ENCODE measurements at regions of chr7 and their contacts with region 1.

Region 1: GRCh38 chr7:148503875-148504487 is 86.6 kb upstream of the C7orf33 start:
- DNase-seq: peak in 1 of 2 experiments; percentile 29
- H3K4me3 ChIP-seq: no peak overlapping the region
- H3K4me3 Mint-ChIP-seq: no peak overlapping the region
- H3K27ac Mint-ChIP-seq: no peak overlapping the region
- H3K4me1 ChIP-seq: no peaks in the 10 kb centered on the region
- H3K4me1 Mint-ChIP-seq: peaks cover 20% of the 10 kb centered on the region
- H3K27me3 ChIP-seq: no peaks in the 10 kb centered on the region
- H3K27me3 Mint-ChIP-seq: no peaks in the 10 kb centered on the region
- CTCF ChIP-seq: peak; percentile 68 to 76

Region 2: GRCh38 chr7:148318102-148318811 is 185.7 kb before region 1 on chr7:
- CTCF ChIA-PET with region 1: no interaction called
- POLR2A ChIA-PET with region 1: interaction called, 12 read pairs
- intact Hi-C with region 1: no loop called
- DNase-seq: peak in 1 of 2 experiments; percentile 51
- H3K4me3 ChIP-seq: no peak overlapping the region
- H3K4me3 Mint-ChIP-seq: peak overlapping the region; percentile 28
- H3K27ac Mint-ChIP-seq: peak overlapping the region; percentile 58
- H3K4me1 ChIP-seq: peaks cover 24% of the 10 kb centered on the region
- H3K4me1 Mint-ChIP-seq: peaks cover 7% of the 10 kb centered on the region
- H3K27me3 ChIP-seq: no peaks in the 10 kb centered on the region
- H3K27me3 Mint-ChIP-seq: no peaks in the 10 kb centered on the region
- CTCF ChIP-seq: no peak

Region 3: GRCh38 chr7:148527707-148528168 is 23.8 kb after region 1 on chr7:
- CTCF ChIA-PET with region 1: no interaction called
- POLR2A ChIA-PET with region 1: no interaction called
- intact Hi-C with region 1: loop called (anchors 1 kb)
- DNase-seq: peak; percentile 67 to 73
- H3K4me3 ChIP-seq: no peak overlapping the region
- H3K4me3 Mint-ChIP-seq: no peak overlapping the region
- H3K27ac Mint-ChIP-seq: no peak overlapping the region
- H3K4me1 ChIP-seq: peaks cover 12% of the 10 kb centered on the region; the same call in 1 of the 2 replicates
- H3K4me1 Mint-ChIP-seq: peaks cover 13% of the 10 kb centered on the region
- H3K27me3 ChIP-seq: no peaks in the 10 kb centered on the region
- H3K27me3 Mint-ChIP-seq: peaks cover 3% of the 10 kb centered on the region
- CTCF ChIP-seq: peak; percentile 32 to 50

Region 4: DNA sequence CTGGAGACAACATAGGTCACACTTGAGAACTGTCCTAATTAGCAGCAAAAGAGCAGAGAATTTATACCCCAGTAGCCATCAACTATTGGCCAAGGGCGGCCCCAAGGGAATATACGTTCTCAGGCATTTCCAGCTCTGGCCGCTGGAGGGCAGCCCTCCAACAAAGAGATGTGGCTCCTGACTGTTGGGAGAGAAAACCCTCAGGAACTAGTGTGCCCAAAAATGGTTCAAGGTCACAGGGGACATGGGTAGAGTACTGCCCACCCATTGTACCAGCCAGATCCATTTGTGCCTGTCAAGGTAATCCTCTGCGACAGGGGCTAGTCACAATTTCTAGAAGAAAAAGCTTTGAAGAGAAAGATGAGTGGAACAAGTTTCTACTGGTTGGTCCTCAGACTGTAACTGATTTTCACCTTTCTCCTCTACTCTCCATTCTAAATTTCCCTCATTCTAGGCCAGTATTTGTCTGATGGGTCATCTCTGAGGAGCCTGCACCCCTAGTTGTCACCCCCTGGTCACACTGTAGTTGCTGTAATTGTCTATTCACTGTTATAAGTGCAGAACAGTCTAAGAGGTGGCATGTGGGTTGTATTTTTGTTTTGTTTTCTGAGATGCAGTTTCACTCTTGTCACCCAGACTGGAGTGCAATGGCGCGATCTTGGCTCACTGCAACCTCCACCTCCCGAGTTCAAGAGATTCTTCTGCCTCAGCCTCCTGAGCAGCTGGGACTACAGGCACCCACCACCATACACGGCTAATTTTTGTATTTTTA is 71.8 kb after region 1 on chr7:
- CTCF ChIA-PET with region 1: no interaction called
- POLR2A ChIA-PET with region 1: no interaction called
- intact Hi-C with region 1: loop called (anchors 5 kb)
- DNase-seq: peak; percentile 61 to 76
- H3K4me3 ChIP-seq: no peak overlapping the region
- H3K4me3 Mint-ChIP-seq: no peak overlapping the region
- H3K27ac Mint-ChIP-seq: no peak overlapping the region
- H3K4me1 ChIP-seq: no peaks in the 10 kb centered on the region
- H3K4me1 Mint-ChIP-seq: no peaks in the 10 kb centered on the region
- H3K27me3 ChIP-seq: no peaks in the 10 kb centered on the region
- H3K27me3 Mint-ChIP-seq: peaks cover 3% of the 10 kb centered on the region
- CTCF ChIP-seq: peak; percentile 85 to 90

Region 5: GRCh38 chr7:148687555-148687954 is 183.6 kb after region 1 on chr7:
- CTCF ChIA-PET with region 1: no interaction called
- POLR2A ChIA-PET with region 1: no interaction called
- intact Hi-C with region 1: no loop called
- DNase-seq: no peak
- H3K4me3 ChIP-seq: no peak overlapping the region
- H3K4me3 Mint-ChIP-seq: no peak overlapping the region
- H3K27ac Mint-ChIP-seq: no peak overlapping the region
- H3K4me1 ChIP-seq: no peaks in the 10 kb centered on the region
- H3K4me1 Mint-ChIP-seq: no peaks in the 10 kb centered on the region
- H3K27me3 ChIP-seq: no peaks in the 10 kb centered on the region
- H3K27me3 Mint-ChIP-seq: no peaks in the 10 kb centered on the region
- CTCF ChIP-seq: no peak

Region 6: DNA sequence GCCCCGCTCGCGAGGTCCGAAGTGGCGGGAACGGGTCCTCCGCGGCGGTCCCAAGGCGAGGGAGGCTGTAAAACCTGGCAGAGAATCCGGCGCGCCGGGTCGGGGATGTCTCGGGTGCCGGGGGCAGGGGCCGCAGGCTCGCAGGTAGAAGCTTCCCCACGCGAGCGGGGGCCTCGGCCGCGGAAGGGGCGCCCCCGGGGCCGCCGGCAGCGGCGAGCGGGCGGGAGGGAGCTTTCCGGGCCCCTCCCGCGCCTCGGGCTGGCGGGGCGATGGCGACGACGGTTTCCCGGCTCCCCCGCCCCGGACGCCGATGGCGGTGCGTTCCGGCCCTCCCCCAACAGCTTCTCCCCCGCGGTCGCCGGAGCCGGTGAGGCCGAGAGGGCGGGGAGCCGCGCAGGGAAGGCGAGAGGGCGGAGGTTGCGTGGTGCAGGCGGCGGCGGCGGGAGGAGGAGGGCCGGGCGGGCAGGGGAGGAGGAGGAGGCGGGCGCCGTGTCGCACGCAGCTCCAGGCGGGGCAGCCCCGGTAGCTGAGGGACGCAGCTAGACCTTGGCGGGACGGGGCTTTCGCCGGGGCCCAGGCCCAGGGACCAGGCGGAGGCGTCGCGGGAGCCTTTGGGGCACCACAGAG is 194.5 kb after region 1 on chr7 and contains the start of gene CUL1:
- CTCF ChIA-PET with region 1: no interaction called
- POLR2A ChIA-PET with region 1: no interaction called
- intact Hi-C with region 1: loop called (anchors 5 kb)
- DNase-seq: peak; percentile 91
- H3K4me3 ChIP-seq: peak within 1 kb of the TSS; percentile 88
- H3K4me3 Mint-ChIP-seq: peak within 1 kb of the TSS; percentile 81
- H3K27ac Mint-ChIP-seq: peak within 1 kb of the TSS; percentile 60
- H3K4me1 ChIP-seq: peaks cover 21% of the 10 kb centered on the region
- H3K4me1 Mint-ChIP-seq: peaks cover 31% of the 10 kb centered on the region
- H3K27me3 ChIP-seq: no peaks in the 10 kb centered on the region
- H3K27me3 Mint-ChIP-seq: no peaks in the 10 kb centered on the region
- CTCF ChIP-seq: no peak
- total RNA-seq, gene CUL1: 66.6 and 71.9 TPM in 2 replicates

Region 7: DNA sequence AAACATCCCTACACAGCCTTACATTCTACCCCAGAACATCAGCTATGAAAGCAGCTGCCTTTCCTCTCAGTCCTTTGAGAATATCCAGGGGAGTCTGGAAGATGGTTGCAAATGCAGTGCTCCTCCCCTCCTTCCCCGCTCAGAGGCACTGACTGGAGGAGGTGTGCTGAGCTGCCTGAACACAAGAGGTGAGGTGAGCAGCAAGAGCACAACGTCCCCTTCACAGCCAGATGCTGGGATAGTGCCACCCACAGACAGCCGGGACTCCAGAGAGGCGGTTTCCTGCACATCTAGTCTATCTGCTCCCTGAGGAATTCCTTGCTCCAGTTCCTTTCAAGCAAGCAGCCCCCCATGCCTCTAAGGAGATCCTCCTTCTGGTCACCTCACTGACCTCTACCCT is 305.9 kb after region 1 on chr7:
- CTCF ChIA-PET with region 1: no interaction called
- POLR2A ChIA-PET with region 1: no interaction called
- intact Hi-C with region 1: loop called (anchors 10 kb)
- DNase-seq: no peak
- H3K4me3 ChIP-seq: no peak overlapping the region
- H3K4me3 Mint-ChIP-seq: no peak overlapping the region
- H3K27ac Mint-ChIP-seq: no peak overlapping the region
- H3K4me1 ChIP-seq: no peaks in the 10 kb centered on the region
- H3K4me1 Mint-ChIP-seq: no peaks in the 10 kb centered on the region
- H3K27me3 ChIP-seq: no peaks in the 10 kb centered on the region
- H3K27me3 Mint-ChIP-seq: no peaks in the 10 kb centered on the region
- CTCF ChIP-seq: no peak

Measured in Caco-2 (cell line).